ENCODE measurements at regions of chr18 and their contacts with region 1.

Region 1: GRCh38 chr18:56748698-56749268 is 97.6 kb downstream of the WDR7 start:
- DNase-seq: peak; percentile 0
- H3K4me3 ChIP-seq: no peak overlapping the region
- CTCF ChIP-seq: peak; percentile 52

Region 2: DNA sequence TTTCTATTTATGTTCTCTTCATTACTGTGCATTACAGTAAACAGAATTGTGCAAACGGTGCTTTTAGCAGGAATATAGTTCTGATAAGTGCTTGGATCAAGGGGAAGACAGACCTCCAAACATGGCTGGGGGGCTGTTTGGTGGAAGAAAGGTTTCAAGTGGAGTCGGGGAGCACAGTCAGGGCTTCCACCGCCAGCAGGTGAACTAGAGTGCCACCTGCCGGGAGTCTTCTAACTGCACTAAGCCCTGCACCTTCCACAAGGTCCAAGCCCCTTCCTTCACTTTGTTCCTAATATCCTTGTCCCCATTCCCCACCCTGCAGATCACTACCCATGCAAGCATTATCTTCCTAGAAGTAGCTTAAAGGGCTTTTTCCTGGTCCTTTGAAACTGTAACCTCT is 697.5 kb after region 1 on chr18:
- CTCF ChIA-PET with region 1: interaction called, 15 read pairs
- POLR2A ChIA-PET with region 1: no interaction called
- DNase-seq: no peak
- H3K4me3 ChIP-seq: no peak overlapping the region
- CTCF ChIP-seq: peak; percentile 42

Measured in AG04449 (cell line).